ENCODE measurements at regions of chr17 and their contacts with region 1.

Region 1: GRCh38 chr17:38868817-38869525 is 887 bp upstream of the LASP1 start:
- DNase-seq: peak; percentile 93
- ATAC-seq: peak; percentile 50
- H3K4me3 ChIP-seq: peak overlapping the region; percentile 43 to 100 (median 100)
- H3K4me3 Mint-ChIP-seq: peak overlapping the region; percentile 99
- H3K27ac ChIP-seq: peak overlapping the region; percentile 78 to 87
- H3K27ac Mint-ChIP-seq: peak overlapping the region; percentile 99
- H3K4me1 ChIP-seq: peaks cover 40 to 55% of the 10 kb centered on the region in 2 donors
- H3K4me1 Mint-ChIP-seq: peaks cover 57% of the 10 kb centered on the region
- H3K27me3 ChIP-seq: no peaks in the 10 kb centered on the region
- H3K27me3 Mint-ChIP-seq: no peaks in the 10 kb centered on the region
- CTCF ChIP-seq: no peak

Region 2: DNA sequence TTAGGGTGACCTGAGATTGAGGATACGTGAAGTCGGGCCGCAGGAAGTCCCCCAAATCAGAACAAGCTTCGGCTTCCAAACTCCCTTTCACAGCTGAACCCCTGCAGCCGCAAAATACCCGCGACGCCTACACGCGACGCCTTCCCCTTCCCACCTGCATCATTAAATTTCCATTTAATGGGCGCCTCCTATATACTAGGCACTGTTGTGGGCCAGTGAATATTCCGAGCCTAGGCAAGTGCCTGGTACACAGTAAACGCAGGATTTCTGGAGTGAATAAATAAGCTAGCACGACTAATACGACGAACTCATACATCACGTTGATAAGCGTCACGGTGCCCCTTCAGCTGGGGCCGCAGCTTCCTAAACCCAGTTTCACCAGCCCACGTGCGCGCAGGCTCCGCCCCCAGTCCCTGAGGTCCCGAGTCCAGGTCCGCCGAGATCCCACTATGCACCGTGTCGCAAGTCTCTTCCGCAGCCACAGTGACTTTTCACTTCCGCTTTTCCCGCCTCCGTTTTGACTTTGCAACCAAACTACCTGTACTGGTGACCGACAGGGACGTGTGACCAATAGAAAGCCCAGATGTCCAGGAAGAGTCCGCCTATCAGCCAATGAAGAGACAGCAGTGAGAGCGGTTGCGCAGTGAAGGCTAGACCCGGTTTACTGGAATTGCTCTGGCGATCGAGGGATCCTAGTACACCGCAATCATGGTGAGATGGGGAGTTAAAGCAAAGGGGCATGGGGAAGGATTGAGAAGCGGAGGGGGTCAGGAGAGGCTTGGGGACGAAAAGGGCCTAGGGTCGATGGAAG is 116.6 kb before region 1 on chr17 and contains the start of gene PSMB3:
- CTCF ChIA-PET with region 1: interaction called, 4 read pairs
- POLR2A ChIA-PET with region 1: interaction called, 4 read pairs
- intact Hi-C with region 1: loop called (anchors 1 kb)
- DNase-seq: peak; percentile 100
- ATAC-seq: peak; percentile 85
- H3K4me3 ChIP-seq: peak within 1 kb of the TSS; percentile 61 to 100 (median 97)
- H3K4me3 Mint-ChIP-seq: peak within 1 kb of the TSS; percentile 94
- H3K27ac ChIP-seq: peak within 1 kb of the TSS; percentile 88 to 95
- H3K27ac Mint-ChIP-seq: peak within 1 kb of the TSS; percentile 93
- H3K4me1 ChIP-seq: peaks cover 49 to 59% of the 10 kb centered on the region in 2 donors
- H3K4me1 Mint-ChIP-seq: peaks cover 45% of the 10 kb centered on the region
- H3K27me3 ChIP-seq: peaks cover 0 to 37% (median 25%) of the 10 kb centered on the region in 4 experiments
- H3K27me3 Mint-ChIP-seq: peaks cover 21% of the 10 kb centered on the region
- CTCF ChIP-seq: no peak
- total RNA-seq, gene PSMB3: 106 and 109 TPM in 2 replicates

Region 3: DNA sequence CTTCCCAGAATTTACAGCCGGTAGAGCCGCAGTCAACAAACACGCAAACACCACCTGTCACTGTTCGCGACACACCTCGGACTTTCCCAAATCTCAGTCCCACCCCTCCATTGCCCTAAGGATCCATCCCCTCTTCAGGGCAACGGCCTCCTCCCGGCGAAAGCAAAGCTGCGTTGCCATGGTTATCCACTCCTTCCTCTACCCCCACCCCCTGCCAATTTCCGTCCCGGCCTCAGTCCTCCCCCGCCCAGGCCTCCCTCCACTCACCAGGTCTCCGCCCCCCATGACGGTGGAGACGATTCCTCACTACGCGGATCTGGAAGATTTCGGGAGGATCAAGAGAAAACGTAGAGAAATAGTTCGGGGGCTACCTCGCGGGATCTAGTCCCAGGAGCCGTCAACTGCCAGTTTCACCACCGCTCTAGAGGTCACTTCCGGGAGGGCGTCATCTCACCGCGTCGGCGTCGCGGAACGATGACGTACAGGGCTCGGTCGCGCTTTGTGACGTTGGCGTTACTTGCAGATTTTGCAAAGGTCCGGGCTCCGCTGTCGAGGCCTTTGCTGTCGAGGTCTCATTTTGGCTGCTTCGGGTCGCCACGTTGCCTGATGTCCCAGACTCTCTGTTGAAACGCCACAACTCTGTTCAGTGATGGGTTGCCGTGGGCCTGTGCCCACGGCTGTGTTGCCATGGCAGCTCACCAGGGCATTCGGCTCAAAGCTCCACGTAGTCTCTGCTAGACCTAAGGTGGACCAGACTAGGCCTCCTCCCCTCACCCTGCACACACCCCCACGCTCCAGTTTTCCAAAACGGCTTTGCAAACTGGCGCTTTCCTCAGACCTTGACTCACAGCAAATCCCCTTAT is 43.8 kb before region 1 on chr17 and contains the start of gene CWC25:
- CTCF ChIA-PET with region 1: interaction called, 5 read pairs
- POLR2A ChIA-PET with region 1: interaction called, 12 read pairs
- intact Hi-C with region 1: loop called (anchors 1 kb)
- DNase-seq: peak; percentile 100
- ATAC-seq: peak; percentile 83
- H3K4me3 ChIP-seq: peak within 1 kb of the TSS; percentile 77 to 93 (median 81)
- H3K4me3 Mint-ChIP-seq: peak within 1 kb of the TSS; percentile 98
- H3K27ac ChIP-seq: peak within 1 kb of the TSS; percentile 88 to 97
- H3K27ac Mint-ChIP-seq: peak within 1 kb of the TSS; percentile 100
- H3K4me1 ChIP-seq: peaks cover 14 to 19% of the 10 kb centered on the region in 2 donors
- H3K4me1 Mint-ChIP-seq: peaks cover 26% of the 10 kb centered on the region
- H3K27me3 ChIP-seq: no peaks in the 10 kb centered on the region
- H3K27me3 Mint-ChIP-seq: no peaks in the 10 kb centered on the region
- CTCF ChIP-seq: no peak
- total RNA-seq, gene CWC25: 39.3 and 43.3 TPM in 2 replicates

Region 4: GRCh38 chr17:38898812-38899348 is 29.9 kb after region 1 on chr17:
- CTCF ChIA-PET with region 1: interaction called, 10 read pairs
- POLR2A ChIA-PET with region 1: interaction called, 27 read pairs
- intact Hi-C with region 1: loop called (anchors 1 kb)
- DNase-seq: peak; percentile 85
- ATAC-seq: peak; percentile 92
- H3K4me3 ChIP-seq: peak overlapping the region; percentile 23 to 55 (median 36)
- H3K4me3 Mint-ChIP-seq: peak overlapping the region; percentile 91
- H3K27ac ChIP-seq: peak overlapping the region; percentile 90 to 96
- H3K27ac Mint-ChIP-seq: peak overlapping the region; percentile 99
- H3K4me1 ChIP-seq: peaks cover 29 to 45% of the 10 kb centered on the region in 2 donors
- H3K4me1 Mint-ChIP-seq: peaks cover 30% of the 10 kb centered on the region
- H3K27me3 ChIP-seq: no peaks in the 10 kb centered on the region
- H3K27me3 Mint-ChIP-seq: no peaks in the 10 kb centered on the region
- CTCF ChIP-seq: no peak

Region 5: GRCh38 chr17:38958756-38959155 is 89.8 kb after region 1 on chr17:
- CTCF ChIA-PET with region 1: no interaction called
- POLR2A ChIA-PET with region 1: no interaction called
- intact Hi-C with region 1: no loop called
- DNase-seq: no peak
- ATAC-seq: no peak
- H3K4me3 ChIP-seq: no peak overlapping the region
- H3K4me3 Mint-ChIP-seq: no peak overlapping the region
- H3K27ac ChIP-seq: no peak overlapping the region
- H3K27ac Mint-ChIP-seq: no peak overlapping the region
- H3K4me1 ChIP-seq: no peaks in the 10 kb centered on the region
- H3K4me1 Mint-ChIP-seq: no peaks in the 10 kb centered on the region
- H3K27me3 ChIP-seq: no peaks in the 10 kb centered on the region
- H3K27me3 Mint-ChIP-seq: no peaks in the 10 kb centered on the region
- CTCF ChIP-seq: no peak

Region 6: GRCh38 chr17:38982858-38983746 is 114.1 kb after region 1 on chr17:
- CTCF ChIA-PET with region 1: interaction called, 30 read pairs
- POLR2A ChIA-PET with region 1: no interaction called
- intact Hi-C with region 1: no loop called
- DNase-seq: peak; percentile 76
- ATAC-seq: peak; percentile 24
- H3K4me3 ChIP-seq: no peak overlapping the region
- H3K4me3 Mint-ChIP-seq: no peak overlapping the region
- H3K27ac ChIP-seq: no peak overlapping the region
- H3K27ac Mint-ChIP-seq: no peak overlapping the region
- H3K4me1 ChIP-seq: no peaks in the 10 kb centered on the region
- H3K4me1 Mint-ChIP-seq: peaks cover 2% of the 10 kb centered on the region
- H3K27me3 ChIP-seq: peaks cover 0 to 3% (median 0%) of the 10 kb centered on the region in 4 experiments
- H3K27me3 Mint-ChIP-seq: peaks cover 16% of the 10 kb centered on the region
- CTCF ChIP-seq: peak; percentile 82

Measured in B cell (primary cell).